Psoas muscle (tissue), 8 donors: ENCODE measurements at regions of chr15 and their contacts with region 1.

Region 1: DNA sequence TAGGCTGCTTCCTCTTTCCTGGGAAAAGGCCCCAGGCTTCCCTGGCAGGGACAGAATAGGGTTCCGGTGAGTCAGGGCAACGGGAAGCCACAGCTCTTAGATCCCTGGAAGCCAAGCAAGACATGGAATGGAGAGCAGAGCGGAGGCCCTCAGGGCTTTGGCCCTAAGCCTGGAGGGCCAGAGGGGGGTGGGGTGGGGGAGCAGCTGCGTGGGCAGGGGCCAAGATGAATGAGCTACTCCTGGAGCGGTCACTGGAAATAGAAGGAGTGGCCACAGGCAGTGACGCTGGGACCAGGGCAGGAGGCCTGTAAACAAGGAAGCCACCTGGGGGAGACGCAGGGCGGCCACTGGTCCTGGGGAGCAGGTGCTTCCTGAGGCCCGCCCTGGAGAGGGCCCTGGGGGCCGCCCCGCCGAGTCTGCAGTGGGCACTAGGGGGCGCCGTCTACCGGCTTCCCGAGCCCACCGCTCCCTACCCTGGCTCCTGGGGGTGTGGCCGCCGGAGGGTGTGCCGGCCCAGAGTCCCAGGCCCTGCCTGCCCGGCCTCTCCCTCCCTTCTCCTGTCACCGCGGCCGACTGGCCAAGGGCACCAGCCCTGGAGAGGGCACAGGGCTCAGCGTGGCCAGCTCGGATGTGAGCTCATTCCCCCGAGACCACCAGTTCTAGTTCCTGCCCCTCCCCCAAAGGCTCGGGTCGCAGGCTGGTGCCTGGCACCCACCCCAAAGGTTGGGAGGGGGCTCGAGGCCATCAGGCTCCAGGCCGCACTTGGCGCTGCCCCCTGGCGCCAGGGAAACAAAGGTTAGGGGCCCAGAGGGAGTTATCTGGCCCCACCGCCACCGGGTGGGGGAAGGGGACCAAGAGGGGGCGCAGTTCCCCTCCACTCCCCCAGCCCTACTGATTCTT is 12.1 kb downstream of the VPS18 start:
- DNase-seq: peak; percentile 89 to 94
- ATAC-seq: peak; percentile 80 to 84 (median 82)
- H3K4me3 ChIP-seq: peak overlapping the region; percentile 69
- H3K27ac ChIP-seq: peak overlapping the region; percentile 97
- H3K4me1 ChIP-seq: peaks cover 51% of the 10 kb centered on the region
- H3K27me3 ChIP-seq: no peaks in the 10 kb centered on the region
- CTCF ChIP-seq: peak; percentile 89

Region 2: DNA sequence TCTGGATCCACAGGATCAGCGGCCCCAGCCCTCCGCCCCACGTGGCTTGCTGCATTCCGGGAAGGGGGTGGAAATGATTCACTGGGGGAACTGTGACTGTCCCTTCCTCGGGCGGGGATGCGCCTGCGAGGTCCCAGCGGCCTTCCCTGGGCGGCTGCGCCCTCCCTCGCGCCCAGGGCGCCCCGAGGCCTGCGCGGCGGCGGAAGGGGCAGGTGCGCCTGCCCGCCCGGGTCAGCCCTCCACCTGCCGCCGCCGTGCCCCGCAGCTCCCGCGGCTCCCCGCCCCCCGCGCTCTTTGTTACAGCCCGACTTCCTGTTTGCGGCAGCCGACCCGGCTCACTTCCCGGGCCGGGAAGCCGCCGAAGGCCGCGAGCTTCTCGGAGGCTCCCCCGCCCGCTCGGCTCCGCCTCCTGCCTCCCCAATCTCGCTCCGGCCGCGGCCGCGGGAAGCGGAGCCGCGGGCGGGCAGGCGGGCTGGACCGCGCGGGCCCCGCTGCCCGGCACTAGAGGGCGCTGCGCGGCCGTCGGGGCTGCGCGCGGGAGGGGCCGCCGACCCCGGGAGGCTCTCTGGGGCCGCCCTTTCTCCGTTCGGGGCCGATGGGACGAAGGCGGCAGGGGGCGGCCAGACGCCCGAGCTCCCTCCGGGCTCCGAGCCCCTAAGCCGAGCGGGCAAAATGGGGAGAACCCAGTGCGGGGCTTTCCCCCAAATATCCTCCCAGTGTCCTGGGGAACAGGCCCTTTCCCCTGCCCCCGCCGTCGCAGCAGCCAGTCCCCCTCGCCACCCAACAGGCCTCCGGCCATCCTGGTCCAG is 35.4 kb after region 1 on chr15:
- intact Hi-C with region 1: loop called (anchors 2 to 5 kb)
- DNase-seq: peak; percentile 83 to 88
- ATAC-seq: peak; percentile 64 to 81 (median 72)
- H3K4me3 ChIP-seq: peak overlapping the region; percentile 71
- H3K27ac ChIP-seq: peak overlapping the region; percentile 73
- H3K4me1 ChIP-seq: peaks cover 30% of the 10 kb centered on the region
- H3K27me3 ChIP-seq: no peaks in the 10 kb centered on the region
- CTCF ChIP-seq: peak; percentile 80

Region 3: DNA sequence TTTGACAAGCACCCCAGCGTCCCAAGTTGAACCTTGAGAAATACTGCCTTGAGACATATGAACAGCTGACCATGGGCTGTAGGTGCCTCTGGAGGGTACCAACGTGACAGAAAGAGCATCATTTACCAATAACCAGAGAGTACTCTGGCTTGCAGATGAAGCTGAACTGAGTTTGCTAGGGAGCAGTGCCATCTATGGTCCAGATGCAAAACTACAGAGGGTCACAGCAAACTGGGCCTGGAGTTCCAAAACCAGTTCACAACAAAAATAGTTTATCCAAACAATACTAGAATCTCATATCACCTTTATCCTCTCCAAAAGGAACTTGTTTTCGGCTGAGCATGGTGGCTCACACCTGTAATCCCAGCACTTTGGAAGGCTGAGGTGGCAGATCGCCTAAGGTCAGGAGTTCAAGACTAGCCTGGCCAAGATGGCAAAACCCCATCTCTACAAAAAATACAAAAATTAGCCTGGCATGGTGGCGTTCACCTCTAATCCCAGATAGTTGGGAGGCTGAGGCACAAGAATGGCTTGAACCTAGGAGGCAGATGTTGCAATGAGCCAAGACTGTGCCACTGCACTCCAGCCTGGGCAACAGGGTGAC is 116.2 kb after region 1 on chr15:
- intact Hi-C with region 1: loop called (anchors 2 to 5 kb)
- DNase-seq: no peak
- ATAC-seq: peak; percentile 61 to 78 (median 72)
- H3K4me3 ChIP-seq: no peak overlapping the region
- H3K27ac ChIP-seq: no peak overlapping the region
- H3K4me1 ChIP-seq: peaks cover 10% of the 10 kb centered on the region
- H3K27me3 ChIP-seq: no peaks in the 10 kb centered on the region
- CTCF ChIP-seq: peak; percentile 68

Region 4: DNA sequence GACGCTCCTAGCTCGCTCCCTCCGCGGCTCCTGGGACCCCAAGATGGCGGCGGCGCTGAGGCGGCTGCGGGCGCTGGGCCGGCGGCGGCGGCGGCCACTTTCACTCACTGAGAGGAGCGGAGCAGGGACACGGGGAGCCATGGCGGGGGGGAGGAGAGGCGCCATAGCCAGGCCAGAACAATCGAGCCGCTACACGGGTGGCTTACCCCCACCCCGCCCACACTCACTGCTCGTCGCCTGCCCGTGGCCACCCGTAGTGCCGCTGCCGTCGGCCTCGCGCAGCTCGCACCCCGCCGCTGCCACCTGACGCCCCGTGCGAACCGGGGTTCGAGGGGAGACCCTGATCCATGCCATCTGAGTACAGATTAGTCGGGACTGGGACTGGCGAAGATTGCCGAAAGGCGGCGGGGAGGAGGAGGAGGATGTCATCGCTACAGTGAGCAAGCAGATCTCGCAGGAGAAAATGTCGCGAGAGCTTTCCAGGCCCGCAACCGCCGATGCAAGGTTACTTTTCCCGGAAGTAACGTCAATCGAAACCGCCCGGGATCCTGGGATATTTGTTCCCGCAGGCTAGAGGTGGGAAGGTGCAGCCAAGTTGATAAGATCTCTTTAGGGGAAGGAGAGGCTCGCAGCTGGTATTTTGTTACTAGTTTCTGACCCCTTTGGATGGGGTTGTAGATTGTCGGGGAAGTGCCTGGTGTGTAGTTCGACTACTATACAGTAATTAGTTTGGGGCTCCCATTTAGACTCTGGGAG is 210.0 kb after region 1 on chr15 and contains the start of gene INO80:
- intact Hi-C with region 1: loop called in 1 of 2 experiments (anchors 10 kb)
- DNase-seq: peak; percentile 98 to 99
- ATAC-seq: peak; percentile 92 to 93 (median 92)
- H3K4me3 ChIP-seq: peak within 1 kb of the TSS; percentile 81
- H3K27ac ChIP-seq: peak within 1 kb of the TSS; percentile 97
- H3K4me1 ChIP-seq: peaks cover 22% of the 10 kb centered on the region
- H3K27me3 ChIP-seq: peaks cover 0 to 2% (median 0%) of the 10 kb centered on the region in 3 donors
- CTCF ChIP-seq: no peak
- total RNA-seq, gene INO80: 12.4 to 30.5 (median 22.7) TPM

Region 5: GRCh38 chr15:41230650-41231533 is 324.6 kb after region 1 on chr15 and contains the starts of genes CHP1 and EXD1:
- intact Hi-C with region 1: loop called in 1 of 2 experiments (anchors 5 kb)
- DNase-seq: peak; percentile 99 to 100
- ATAC-seq: peak; percentile 98 to 99 (median 98)
- H3K4me3 ChIP-seq: peak within 1 kb of the TSS; percentile 83
- H3K27ac ChIP-seq: peak within 1 kb of the TSS; percentile 91
- H3K4me1 ChIP-seq: peaks cover 24% of the 10 kb centered on the region
- H3K27me3 ChIP-seq: no peaks in the 10 kb centered on the region
- CTCF ChIP-seq: peak; percentile 86
- total RNA-seq, gene CHP1: 103 to 194 (median 137) TPM
- total RNA-seq, gene EXD1: not detected